Cardiac septum (tissue), 1 donor: ENCODE measurements at regions of chr10 and their contacts with region 1.

Region 1: DNA sequence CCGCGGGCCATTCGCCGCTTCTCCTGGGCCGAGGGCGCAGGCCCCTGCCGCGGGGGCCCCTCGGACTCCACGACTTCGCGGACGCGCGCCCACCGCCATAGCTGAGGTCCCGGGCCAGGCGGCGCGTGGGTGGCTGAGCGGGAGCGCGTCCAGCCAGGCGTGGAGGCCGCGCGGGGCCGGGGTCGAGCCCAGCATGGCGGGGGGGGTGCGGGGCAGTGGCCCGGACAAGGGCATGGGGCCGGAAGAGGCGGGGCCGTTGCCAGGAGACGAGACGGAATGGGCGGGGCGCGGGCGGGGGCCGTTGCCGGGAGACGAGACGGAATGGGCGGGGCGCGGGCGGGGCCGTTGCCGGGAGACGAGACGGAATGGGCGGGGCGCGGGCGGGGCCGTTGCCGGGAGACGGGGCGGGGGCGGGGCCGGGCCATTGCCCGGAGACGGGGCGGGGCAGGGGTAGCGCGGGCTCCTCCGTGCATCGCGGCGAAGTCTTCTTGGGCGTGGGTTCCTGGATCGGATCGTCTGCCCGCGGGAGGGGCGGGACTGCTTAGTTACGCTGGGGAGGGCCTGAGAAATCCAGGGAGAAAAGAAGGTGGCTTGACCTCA is 14.8 kb downstream of the ADAM8 start:
- DNase-seq: peak; percentile 97

Region 2: GRCh38 chr10:133139551-133140065 is 122.2 kb before region 1 on chr10:
- intact Hi-C with region 1: loop called (anchors 10 kb)
- DNase-seq: peak; percentile 24

Region 3: GRCh38 chr10:133230387-133231195 is 31.2 kb before region 1 on chr10:
- intact Hi-C with region 1: no loop called
- DNase-seq: no peak

Region 4: DNA sequence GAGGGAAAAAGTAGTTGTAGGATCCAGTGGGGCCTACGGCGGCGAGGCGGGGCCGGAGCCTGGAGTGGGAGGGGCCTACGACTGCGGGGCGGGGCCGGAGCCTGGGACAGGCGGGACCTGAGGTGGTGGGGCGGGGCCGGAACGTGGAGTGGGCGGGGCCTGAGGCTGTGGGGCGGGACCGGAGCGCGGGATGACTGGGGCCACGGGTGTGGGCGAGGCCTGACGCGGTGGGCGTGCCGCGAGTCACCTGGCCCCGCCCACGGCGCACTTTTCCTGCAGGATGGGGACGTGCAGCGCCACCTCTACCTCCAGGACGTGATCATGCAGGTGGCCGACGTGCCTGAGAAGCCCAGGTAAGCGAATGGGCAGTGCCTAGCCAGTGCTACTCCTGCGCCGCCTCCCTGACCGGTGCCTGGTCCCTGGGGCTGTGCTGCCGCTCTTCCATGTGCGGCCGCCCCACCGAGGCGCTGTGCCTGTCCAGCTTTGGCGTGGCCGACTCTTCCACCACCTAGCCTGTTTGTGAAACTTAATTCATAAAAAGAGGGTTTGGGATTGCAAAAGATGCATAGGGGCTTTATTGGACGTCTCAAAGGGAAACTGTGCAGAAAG is 47.4 kb after region 1 on chr10:
- intact Hi-C with region 1: loop called (anchors 5 kb)
- DNase-seq: peak; percentile 98